ENCODE measurements at regions of chr2 and their contacts with region 1.

Region 1: DNA sequence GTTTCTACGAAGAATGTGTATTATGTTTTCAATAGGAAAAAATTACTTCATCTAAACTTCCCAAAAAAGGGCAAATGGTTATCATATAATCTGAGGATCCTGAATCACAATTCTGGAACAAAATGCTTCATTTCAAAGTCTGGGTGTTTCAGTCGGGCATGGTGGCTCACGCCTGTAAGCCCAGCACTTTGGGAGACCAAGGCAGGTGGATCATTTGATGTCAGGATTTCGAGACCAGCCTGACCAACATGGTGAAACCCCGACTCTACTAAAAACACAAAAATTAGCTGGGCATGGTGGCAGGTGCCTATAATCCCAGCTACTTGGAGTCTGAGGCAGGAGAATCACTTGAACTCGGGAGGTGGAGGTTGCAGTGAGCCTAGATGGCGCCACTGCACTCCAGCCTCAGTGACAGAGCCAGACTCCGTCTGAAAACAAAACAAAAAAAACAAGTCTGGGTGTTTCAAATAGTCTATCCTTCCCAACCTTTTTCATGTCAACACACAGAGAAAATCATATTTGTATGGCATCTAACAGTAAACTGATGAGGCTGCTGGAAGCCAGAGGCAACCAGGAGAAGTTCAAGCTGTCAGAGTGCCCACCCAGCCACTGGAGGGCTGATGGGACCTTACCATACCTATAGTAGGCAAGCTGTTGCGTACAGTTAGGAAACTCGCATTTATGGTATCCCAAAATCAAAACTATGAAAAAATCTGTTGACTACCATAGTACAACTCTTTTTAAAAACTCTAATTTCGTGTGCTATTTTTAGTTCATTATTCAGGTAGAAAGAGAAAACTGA is 14.6 kb downstream of the NBAS start:
- DNase-seq: no peak
- H3K4me3 ChIP-seq: no peak overlapping the region
- H3K27ac ChIP-seq: peak overlapping the region in 1 of 2 experiments; percentile 66; a peak in 2 of 4 replicates
- H3K4me1 ChIP-seq: peaks cover 0 to 14% of the 10 kb centered on the region in 2 experiments; a peak in 2 of 4 replicates
- H3K27me3 ChIP-seq: no peaks in the 10 kb centered on the region
- CTCF ChIP-seq: peak; percentile 55
- EP300 ChIP-seq: no peak
- RAD21 ChIP-seq: no peak

Region 2: GRCh38 chr2:15560988-15561573 is 14.6 kb after region 1 on chr2 and contains the start of gene NBAS:
- CTCF ChIA-PET with region 1: interaction called, 36 read pairs
- POLR2A ChIA-PET with region 1: interaction called, 3 read pairs
- DNase-seq: peak; percentile 89
- H3K4me3 ChIP-seq: peak within 1 kb of the TSS; percentile 87 to 98
- H3K27ac ChIP-seq: peak within 1 kb of the TSS; percentile 62 to 86; a peak in 3 of 4 replicates
- H3K4me1 ChIP-seq: peaks cover 5 to 15% of the 10 kb centered on the region in 2 experiments; a peak in 2 of 4 replicates
- H3K27me3 ChIP-seq: no peaks in the 10 kb centered on the region
- CTCF ChIP-seq: no peak
- EP300 ChIP-seq: no peak; a peak in 2 of 4 replicates
- RAD21 ChIP-seq: no peak
- polyA plus RNA-seq, gene NBAS: 11.9 and 12.0 TPM in 2 replicates

Region 3: GRCh38 chr2:16069933-16070647 is 523.6 kb after region 1 on chr2:
- CTCF ChIA-PET with region 1: no interaction called
- POLR2A ChIA-PET with region 1: no interaction called
- DNase-seq: no peak
- H3K4me3 ChIP-seq: no peak overlapping the region
- H3K27ac ChIP-seq: no peak overlapping the region
- H3K4me1 ChIP-seq: peaks cover 0 to 13% of the 10 kb centered on the region in 2 experiments; a peak in 1 of 4 replicates
- H3K27me3 ChIP-seq: no peaks in the 10 kb centered on the region
- CTCF ChIP-seq: no peak
- EP300 ChIP-seq: no peak
- RAD21 ChIP-seq: no peak

Measured in SK-N-SH (cell line).